Breast epithelium (tissue), 4 donors: ENCODE measurements at regions of chr22 and their contacts with region 1.

Region 1: DNA sequence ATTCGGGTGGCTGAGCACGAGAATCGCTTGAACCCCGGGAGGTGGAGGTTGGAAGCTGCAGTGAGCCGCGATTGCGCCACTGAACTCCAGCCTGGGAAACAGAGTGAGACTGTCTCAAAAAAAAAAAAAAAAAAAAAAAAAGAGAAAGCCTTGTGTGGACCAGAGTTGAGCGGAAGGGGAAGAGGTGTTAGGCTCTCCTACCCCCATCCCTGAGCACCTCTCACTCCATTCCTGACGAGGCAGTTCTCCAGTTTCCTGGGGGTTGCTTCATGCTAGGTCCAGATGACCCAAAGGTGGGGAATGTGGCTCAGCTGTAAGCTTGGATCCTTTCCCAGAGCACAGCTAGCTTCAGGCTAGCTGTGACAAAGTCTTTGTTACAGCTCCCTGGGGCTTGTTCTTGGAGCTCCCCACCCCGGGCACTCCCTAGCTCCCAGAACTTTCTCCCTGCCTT is 8.8 kb upstream of the DNAL4 start:
- DNase-seq: peak; percentile 64 to 76
- H3K4me3 ChIP-seq: no peak overlapping the region
- H3K27ac ChIP-seq: peak overlapping the region in 1 of 2 donors; percentile 43
- H3K4me1 ChIP-seq: no peaks in the 10 kb centered on the region
- H3K27me3 ChIP-seq: no peaks in the 10 kb centered on the region
- CTCF ChIP-seq: no peak
- POLR2A ChIP-seq: no peak

Region 2: DNA sequence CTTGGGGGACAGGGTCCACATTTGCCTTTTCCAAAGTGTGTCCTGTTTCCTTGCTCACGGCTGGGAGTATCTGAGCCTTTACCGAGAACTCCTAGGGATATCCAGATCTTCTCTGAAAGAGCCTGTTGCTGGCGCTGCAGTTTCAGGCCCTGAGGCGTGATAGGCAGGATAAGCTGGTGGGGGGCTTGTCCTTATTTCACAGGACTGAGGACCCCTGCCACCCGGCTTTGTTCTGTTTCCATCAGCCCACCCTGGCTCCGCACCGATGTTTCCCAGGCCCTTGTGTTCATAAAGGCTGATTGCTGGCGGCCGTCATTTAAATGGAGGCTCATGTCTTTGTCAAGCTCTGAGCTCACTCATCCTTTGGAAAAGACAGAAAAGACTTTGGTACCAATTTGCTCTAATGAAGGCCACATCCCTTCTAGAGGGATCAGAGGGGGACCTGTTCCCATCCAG is 50.5 kb after region 1 on chr22:
- intact Hi-C with region 1: loop called (anchors 2 kb)
- DNase-seq: no peak
- H3K4me3 ChIP-seq: no peak overlapping the region
- H3K27ac ChIP-seq: no peak overlapping the region
- H3K4me1 ChIP-seq: no peaks in the 10 kb centered on the region
- H3K27me3 ChIP-seq: no peaks in the 10 kb centered on the region
- CTCF ChIP-seq: no peak
- POLR2A ChIP-seq: no peak